Activated CD4-positive, alpha-beta T cell treated with anti-CD3 and anti-CD28 coated beads, Interleukin-2, amount 10 ng/mL, durations not matched to agents 24 days and 14 days (primary cell): ENCODE measurements at regions of chr9 and their contacts with region 1.

Region 1: GRCh38 chr9:97900738-97901565 is 21.3 kb downstream of the TRMO start:
- DNase-seq: peak; percentile 76
- H3K4me3 Mint-ChIP-seq: no peak overlapping the region
- H3K27ac Mint-ChIP-seq: no peak overlapping the region
- H3K4me1 Mint-ChIP-seq: peaks cover 33% of the 10 kb centered on the region
- H3K27me3 Mint-ChIP-seq: no peaks in the 10 kb centered on the region

Region 2: DNA sequence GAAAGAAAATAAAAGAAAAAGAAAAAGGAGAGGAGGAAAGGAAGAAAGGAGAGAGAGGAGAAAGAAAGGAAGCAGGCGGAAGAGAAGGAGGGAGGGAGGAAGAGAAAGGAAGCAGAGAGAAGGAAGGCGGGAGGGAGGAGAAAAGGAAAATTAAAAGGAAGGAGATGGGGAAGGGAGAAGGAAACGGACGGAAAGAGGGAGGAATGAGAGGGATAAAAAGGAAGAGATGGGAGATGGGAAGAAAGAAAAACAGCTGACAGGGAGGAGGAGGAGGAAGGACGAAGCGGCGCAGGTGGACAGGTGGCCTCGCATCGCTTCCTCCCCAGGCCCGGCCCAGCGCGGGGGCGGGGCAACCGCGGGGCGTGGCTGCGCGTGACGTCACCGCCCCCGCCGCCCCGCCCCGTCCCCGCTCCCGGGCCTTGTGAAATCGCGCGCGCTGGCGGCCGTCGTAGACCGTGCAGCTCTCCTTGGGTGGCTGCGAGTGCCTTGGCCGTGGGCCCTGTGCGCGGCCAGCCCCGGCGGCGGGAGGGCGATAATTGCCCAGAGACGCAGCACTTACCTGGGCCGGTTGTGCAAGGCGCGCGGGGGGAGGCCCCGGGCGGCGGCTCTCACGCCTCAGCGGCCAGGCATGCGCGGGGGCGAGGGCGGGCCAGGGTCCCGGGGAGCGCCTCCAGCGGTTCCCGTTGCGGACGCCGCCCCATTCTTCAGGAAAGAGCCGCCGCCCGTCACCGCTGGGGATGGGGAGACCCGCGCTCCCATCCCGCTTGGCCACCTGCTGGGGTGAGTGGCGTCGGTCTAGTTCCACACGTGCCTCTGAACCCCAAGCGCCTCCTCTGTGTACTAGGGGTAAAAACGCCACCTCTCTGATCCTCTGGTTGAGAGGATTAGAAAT is 97.5 kb before region 1 on chr9:
- intact Hi-C with region 1: loop called (anchors 10 kb)
- DNase-seq: peak; percentile 92
- H3K4me3 Mint-ChIP-seq: peak overlapping the region; percentile 88
- H3K27ac Mint-ChIP-seq: peak overlapping the region; percentile 68
- H3K4me1 Mint-ChIP-seq: peaks cover 8% of the 10 kb centered on the region
- H3K27me3 Mint-ChIP-seq: peaks cover 40% of the 10 kb centered on the region

Region 3: GRCh38 chr9:97853844-97854695 is 46.9 kb before region 1 on chr9:
- intact Hi-C with region 1: loop called (anchors 5 kb)
- DNase-seq: peak; percentile 88
- H3K4me3 Mint-ChIP-seq: peak overlapping the region; percentile 90
- H3K27ac Mint-ChIP-seq: peak overlapping the region; percentile 56
- H3K4me1 Mint-ChIP-seq: peaks cover 17% of the 10 kb centered on the region
- H3K27me3 Mint-ChIP-seq: peaks cover 75% of the 10 kb centered on the region

Region 4: DNA sequence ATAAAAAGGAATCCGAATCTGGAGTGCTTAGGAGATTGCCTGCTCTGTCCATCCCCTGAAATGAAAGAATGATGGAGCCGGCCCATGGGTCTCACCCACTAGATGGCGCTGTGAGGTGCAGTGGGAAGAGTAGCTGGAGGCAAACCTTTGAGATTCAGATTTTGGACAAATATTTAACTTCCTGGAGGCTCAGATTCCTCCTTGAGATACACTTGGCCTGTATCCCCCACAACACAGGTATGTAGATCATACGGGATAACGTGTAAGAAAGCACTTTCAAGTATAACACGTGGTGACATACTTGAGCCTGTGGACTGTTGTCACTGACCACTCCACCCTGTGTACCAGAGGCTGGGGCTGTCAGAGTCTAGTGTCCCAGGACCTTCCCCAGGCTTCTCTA is 10.9 kb before region 1 on chr9:
- intact Hi-C with region 1: loop called (anchors 1 kb)
- DNase-seq: peak; percentile 91
- H3K4me3 Mint-ChIP-seq: no peak overlapping the region
- H3K27ac Mint-ChIP-seq: no peak overlapping the region
- H3K4me1 Mint-ChIP-seq: peaks cover 6% of the 10 kb centered on the region
- H3K27me3 Mint-ChIP-seq: peaks cover 3% of the 10 kb centered on the region